ENCODE measurements at regions of chr10 and their contacts with region 1.

Region 1: GRCh38 chr10:5873515-5873995 is 16.1 kb downstream of the ANKRD16 start:
- DNase-seq: no peak

Region 2: DNA sequence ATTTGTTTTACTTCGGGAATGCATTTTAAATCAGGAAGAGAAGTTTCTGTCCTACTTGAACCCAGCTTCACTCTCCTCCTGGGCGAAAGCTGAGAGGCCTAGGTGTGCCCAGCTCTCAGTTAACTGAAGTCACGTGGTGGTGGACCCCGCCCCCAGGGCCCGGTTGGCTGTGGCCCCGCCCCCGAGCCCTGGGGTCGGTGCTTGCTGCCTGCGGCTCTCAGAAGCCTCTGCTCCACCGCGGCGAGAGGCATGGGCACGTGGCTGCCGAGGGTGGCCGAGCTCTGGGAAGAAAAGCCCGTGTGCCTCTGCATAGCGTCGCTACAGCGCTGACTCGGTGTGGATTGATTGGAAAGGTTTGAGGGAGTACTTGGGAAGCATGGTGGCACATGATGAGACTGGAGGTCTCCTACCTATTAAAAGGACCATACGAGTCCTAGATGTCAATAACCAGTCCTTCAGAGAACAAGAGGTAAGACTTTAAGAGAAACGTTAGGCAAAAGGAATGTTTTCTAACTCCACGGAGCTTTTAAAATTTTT is 427.1 kb before region 1 on chr10:
- intact Hi-C with region 1: loop called (anchors 5 kb)
- DNase-seq: peak; percentile 93

Region 3: DNA sequence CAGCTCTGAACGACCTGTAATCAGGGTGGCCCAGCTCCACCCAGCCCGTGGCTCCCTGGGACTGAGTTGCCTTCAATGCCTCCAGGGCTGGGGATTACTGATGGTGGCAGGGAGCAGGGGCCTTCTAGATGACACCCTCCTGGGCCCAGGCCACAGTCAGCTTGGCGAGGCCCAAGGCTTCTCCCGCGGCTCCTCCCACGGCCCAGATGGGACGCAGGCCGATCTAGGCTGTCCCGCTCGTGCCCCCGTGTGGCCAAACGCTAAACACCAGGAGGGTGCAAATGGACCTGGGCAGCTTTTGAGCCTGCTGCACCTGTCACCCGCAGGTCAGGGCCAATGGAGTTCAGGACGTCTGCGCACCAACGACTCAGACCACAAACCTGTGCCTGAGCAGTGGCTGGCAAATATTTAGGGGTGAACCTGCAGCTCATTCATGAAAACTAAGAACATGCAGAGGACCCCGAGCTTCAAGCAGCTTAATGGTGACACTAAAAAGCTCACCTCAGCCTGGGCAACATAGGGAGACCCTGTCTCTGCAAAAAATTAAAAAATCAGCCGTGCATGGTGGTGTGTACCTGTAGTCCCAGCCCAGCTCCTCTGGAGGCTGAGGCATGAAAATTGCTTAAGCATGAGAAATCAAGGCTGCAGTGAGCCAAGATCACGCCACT is 250.3 kb before region 1 on chr10:
- intact Hi-C with region 1: loop called (anchors 10 kb)
- DNase-seq: peak; percentile 92

Region 4: DNA sequence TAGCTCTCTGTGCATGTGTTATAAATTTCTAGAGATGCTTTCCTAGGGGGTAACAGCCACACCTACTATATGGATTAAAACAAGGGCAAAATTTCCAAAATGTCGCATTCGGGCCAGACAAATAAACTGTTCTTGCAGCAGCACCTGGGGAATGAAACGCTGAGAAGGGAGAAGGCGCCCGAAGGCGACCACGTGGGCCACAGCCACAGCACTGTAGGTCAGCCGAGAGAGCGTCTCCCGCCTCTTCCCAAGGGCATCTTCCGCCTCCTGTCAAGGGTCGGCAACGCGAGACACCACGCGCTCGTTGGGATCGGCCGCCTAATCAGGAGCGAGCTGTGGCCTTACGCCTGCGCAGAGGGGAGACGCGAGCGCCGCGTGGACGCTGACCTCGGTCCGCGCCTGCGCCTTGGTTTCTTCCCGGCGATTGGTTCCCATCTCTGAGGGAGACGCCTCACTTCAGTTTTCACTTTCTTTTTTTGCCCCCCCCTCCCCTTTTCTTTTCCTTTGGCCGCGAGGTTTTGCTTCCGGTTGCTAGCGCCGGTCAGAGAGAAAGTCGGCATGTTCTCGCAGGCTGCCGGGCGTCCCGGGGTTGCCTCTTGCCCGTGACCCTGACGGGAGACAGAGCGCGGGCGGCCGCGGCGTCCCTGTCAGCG is 189.1 kb before region 1 on chr10 and contains the start of gene TASOR2:
- intact Hi-C with region 1: loop called (anchors 5 kb)
- DNase-seq: peak; percentile 99
- total RNA-seq, gene TASOR2: 38.8 TPM

Region 5: GRCh38 chr10:5813287-5814109 is 60.1 kb before region 1 on chr10 and contains the start of gene GDI2:
- intact Hi-C with region 1: loop called (anchors 5 kb)
- DNase-seq: peak; percentile 98
- total RNA-seq, gene GDI2: 107 TPM

Measured in cardiac septum (tissue), 1 donor.